Dorsolateral prefrontal cortex (tissue), 120 donors: ENCODE measurements at regions of chr7 and their contacts with region 1.

Region 1: GRCh38 chr7:73738612-73739374 is at the start of gene ABHD11:
- DNase-seq: peak; percentile 98 to 100 (median 99)
- H3K4me3 ChIP-seq: peak within 1 kb of the TSS; percentile 57 to 100 (median 93)
- H3K27ac ChIP-seq: peak within 1 kb of the TSS in 58 of 59 donors; percentile 49 to 98 (median 90)
- H3K27me3 ChIP-seq: no peaks in the 10 kb centered on the region
- CTCF ChIP-seq: peak in 8 of 56 donors; percentile 2 to 34 (median 12)
- total RNA-seq, gene ABHD11: 8.9 to 40.2 (median 19.5) TPM

Region 2: DNA sequence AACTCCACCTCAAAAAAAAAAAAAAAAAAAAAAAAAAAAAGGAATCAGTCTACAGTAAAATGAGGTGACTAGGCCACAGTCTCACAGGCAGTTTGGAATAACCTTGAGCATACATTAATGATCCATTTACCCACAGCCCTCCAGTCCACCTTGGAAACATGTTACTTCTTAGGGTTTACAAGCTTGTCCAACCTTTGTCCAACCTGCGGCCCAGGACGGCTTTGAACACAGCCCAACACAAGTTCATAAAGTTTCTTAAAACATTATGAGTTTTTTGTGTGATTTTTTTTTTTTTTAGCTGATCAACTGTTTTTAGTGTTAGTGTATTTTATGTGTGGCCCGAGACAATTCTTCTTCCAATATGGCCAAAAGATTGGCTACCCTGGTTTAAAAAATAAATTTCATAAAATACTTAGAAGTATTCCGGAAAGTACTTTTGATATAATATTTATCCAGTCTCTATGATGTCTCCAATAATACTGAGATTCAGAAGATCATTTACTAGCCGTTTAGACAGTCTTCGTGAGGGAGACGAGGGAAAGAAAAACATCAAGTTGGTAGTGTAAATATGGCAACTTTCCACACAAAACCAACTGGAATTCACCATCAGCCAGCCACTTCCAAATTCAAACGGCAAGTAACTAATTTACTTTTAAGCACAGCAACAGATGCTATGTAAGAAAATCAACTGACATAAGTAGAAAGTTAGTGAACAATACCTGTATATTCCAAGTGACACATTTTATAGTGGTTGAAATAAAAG is 226.6 kb before region 1 on chr7:
- intact Hi-C with region 1: no loop called
- DNase-seq: no peak
- H3K4me3 ChIP-seq: no peak overlapping the region
- H3K27ac ChIP-seq: peak overlapping the region in 2 of 59 donors; percentile 22 to 34
- H3K27me3 ChIP-seq: no peaks in the 10 kb centered on the region
- CTCF ChIP-seq: no peak

Region 3: DNA sequence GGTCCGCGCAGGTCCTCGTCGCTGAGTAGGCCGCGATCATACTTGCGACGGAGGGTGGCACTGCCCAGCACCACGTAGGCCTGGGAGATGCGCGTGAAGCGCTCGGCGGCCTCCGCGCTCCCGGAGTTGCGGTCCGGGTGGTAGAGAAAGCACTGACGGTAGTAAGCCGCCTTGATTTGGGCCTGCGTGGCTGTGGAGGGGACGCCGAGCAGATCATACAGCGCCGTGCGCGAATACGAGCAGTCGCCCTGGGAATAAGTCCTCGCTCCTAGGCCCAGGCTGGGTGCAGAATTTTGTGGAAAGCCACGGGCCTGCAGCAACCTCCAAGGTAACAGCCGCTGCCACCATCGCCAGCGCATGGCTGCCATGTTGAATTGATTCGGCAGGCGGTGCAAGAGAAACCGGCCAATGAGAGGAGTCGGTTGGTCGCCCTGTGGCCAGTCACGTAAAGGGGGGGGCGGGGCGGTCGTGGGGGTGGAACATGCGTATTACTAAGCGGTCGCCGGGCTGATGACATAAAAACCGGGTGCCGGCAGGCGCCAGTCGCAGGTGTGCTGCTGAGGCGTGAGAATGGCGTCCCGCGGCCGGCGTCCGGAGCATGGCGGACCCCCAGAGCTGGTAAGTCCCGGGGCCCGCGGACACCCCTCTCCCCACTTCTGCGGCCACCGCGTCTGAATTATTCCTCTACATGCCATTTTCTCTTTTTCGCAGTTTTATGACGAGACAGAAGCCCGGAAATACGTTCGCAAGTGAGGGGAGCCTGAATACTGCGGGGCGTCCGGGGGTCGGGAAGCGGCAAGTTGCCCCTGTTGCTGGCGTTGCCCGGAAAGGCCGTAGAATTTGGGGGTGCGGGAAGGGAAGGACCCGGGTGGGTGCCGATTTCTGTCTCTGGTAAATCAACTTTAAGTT is 55.5 kb before region 1 on chr7 and contains the starts of genes BUD23 and DNAJC30:
- intact Hi-C with region 1: loop called in 1 of 2 experiments (anchors 5 kb)
- DNase-seq: peak; percentile 90 to 96 (median 94)
- H3K4me3 ChIP-seq: peak within 1 kb of the TSS; percentile 67 to 100 (median 96)
- H3K27ac ChIP-seq: peak within 1 kb of the TSS in 58 of 59 donors; percentile 13 to 94 (median 80)
- H3K27me3 ChIP-seq: no peaks in the 10 kb centered on the region
- CTCF ChIP-seq: peak in 42 of 56 donors; percentile 8 to 53 (median 33)
- total RNA-seq, gene BUD23: 32.0 to 61.9 (median 46.1) TPM
- total RNA-seq, gene DNAJC30: 9.5 to 21.4 (median 15.8) TPM

Region 4: DNA sequence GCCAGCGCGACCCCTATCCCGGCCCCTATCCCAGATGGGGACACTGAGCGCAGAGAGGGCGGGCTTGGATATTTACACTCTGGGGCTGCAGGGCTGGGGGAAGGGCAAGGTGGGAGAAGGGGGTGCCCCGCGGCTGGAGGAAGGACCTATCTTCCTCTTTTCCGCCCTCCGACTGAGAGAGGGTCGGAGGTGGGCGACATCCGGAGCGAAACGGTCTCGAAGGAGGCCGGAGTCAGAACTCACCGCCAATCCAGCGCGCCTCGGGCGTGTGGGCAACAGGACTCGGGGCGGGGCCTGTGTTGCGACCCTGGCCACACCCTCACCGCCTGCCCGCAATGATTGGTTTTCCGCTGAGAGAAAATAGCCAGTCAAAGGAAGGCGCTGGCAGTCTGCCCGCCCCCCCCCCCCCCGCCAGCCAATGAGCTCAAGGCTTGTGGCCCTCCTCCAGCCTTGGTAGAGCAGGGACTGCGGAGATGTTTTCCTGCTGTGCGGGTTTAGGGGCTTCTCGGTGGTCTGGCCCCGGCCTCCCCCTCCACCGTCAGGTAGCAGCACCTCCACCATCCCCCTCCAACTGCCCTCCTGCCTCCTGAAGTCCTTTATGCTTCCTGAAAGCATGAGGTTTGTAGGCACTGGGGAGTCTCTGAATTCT is 103.6 kb after region 1 on chr7 and contains the start of gene METTL27:
- intact Hi-C with region 1: loop called (anchors 5 to 10 kb)
- DNase-seq: peak; percentile 81 to 95 (median 94)
- H3K4me3 ChIP-seq: peak within 1 kb of the TSS; percentile 37 to 93 (median 72)
- H3K27ac ChIP-seq: peak within 1 kb of the TSS in 41 of 59 donors; percentile 7 to 79 (median 48)
- H3K27me3 ChIP-seq: no peaks in the 10 kb centered on the region
- CTCF ChIP-seq: peak in 5 of 56 donors; percentile 8 to 21 (median 13)
- total RNA-seq, gene METTL27: 0.54 to 7.6 (median 2.3) TPM in 118 of 120 experiments, not detected in the others